Activated CD4-positive, alpha-beta T cell treated with anti-CD3 and anti-CD28 coated beads, Interleukin-2, amount 10 ng/mL, durations not matched to agents 7 days and 5 days (primary cell): ENCODE measurements at regions of chr2 and their contacts with region 1.

Region 1: DNA sequence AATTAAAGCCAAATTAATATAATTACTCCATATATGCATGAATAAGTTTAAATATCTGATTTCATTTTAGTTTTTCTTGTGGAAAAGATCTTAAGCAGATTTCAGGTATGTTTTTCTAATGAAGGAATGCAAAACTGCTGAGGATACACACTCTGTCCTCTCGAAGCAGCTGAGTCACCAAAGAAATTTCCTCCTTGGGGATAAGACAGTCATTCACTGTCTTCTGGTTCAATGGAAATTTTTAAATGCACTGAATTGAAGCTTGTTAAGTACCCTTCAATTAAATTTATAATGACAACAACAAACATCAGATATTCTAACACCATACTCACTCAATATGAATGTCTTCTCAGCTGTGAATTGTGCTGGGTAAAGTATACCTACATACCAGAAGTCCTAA is 101.5 kb upstream of the DNER start:
- DNase-seq: no peak
- H3K4me3 Mint-ChIP-seq: no peak overlapping the region
- H3K27ac Mint-ChIP-seq: no peak overlapping the region
- H3K4me1 Mint-ChIP-seq: peaks cover 5% of the 10 kb centered on the region
- H3K27me3 Mint-ChIP-seq: no peaks in the 10 kb centered on the region

Region 2: GRCh38 chr2:229780856-229781773 is 34.7 kb before region 1 on chr2:
- CTCF ChIA-PET with region 1: no interaction called
- POLR2A ChIA-PET with region 1: no interaction called
- DNase-seq: no peak
- H3K4me3 Mint-ChIP-seq: no peak overlapping the region
- H3K27ac Mint-ChIP-seq: peak overlapping the region; percentile 22
- H3K4me1 Mint-ChIP-seq: peaks cover 31% of the 10 kb centered on the region
- H3K27me3 Mint-ChIP-seq: no peaks in the 10 kb centered on the region

Region 3: DNA sequence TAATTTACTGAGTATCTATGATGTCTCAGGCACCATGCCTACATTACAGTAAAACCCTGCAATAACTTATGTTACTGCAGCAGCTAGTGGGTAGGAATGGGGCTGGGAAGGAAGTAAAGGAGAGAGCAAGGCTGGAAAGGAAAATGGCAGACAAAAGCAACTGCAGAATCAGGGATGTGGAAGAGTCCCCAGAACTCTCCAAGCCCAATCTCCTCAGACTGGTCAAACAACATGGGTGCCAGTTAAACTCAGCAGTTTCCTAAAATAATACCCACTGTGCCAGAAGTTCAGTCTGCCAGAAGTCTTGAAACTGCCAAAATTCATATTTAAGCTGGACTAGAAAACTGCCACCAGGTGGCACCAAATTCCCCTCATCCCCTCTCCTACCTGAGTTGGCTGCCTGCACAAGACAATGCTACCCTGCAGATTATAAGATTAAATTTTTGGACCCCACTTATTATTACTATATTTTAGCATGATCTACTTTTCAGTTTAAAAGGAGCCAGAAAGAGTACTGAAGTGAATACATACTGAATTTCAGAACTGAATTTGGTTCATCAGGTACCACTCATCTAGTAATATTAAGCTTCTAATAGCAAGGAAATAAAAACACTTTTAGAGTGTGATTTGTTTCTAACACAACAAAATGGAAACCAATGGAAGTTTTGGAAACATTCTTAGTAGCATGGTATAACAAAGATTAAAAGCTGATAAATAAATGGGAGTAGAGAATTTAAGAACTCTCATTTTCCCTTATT is 14.7 kb before region 1 on chr2:
- CTCF ChIA-PET with region 1: interaction called, 10 read pairs
- POLR2A ChIA-PET with region 1: no interaction called
- DNase-seq: peak; percentile 79
- H3K4me3 Mint-ChIP-seq: no peak overlapping the region
- H3K27ac Mint-ChIP-seq: no peak overlapping the region
- H3K4me1 Mint-ChIP-seq: peaks cover 2% of the 10 kb centered on the region
- H3K27me3 Mint-ChIP-seq: no peaks in the 10 kb centered on the region